ENCODE measurements at regions of chr5 and their contacts with region 1.

Region 1: DNA sequence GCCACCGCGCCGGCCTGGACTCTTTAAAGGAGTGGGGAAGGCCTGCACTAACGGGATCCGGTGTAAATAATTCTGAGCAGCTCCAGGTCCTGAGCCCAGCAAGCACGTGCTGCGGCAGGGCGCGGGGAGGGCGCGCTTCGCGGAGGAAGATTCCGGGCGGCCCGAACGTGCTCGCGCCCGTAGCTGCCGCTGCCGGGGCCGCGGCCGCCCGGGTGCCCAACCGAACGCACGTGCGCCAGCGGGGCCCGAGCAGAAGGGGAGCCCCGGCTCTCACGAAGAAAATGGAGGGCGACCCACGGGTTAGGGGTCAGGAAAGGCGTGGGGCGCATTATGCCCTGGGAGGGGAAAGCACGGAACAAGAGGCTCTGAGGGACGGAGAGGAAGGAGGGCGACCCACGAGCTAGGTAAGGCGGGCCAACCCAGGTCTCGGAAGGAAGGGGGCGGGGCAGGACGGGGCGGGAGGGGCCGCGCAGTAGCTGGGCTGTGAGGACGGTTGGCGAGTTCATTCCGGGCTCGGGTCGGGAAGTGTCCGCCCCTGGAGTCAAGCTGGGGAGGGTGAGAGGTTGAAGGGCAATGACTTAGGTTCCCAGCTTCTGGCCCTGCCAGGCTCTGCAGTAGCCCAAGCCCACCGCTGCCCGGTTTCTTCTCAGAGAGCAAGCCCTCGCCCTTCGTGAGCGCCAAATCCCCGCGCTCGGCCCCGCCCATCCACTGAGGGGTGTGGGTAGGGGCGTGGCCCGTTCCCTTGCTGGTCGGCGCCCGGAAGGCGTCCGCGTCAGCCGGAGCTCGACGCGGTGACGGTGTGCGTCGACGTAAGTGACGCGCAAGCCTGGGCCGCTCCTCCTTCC is at the start of gene ZNF131:
- DNase-seq: peak; percentile 99
- ATAC-seq: peak; percentile 88
- H3K4me3 ChIP-seq: peak within 1 kb of the TSS; percentile 82 to 91 (median 85)
- H3K4me3 Mint-ChIP-seq: peak within 1 kb of the TSS; percentile 94
- H3K27ac ChIP-seq: peak within 1 kb of the TSS; percentile 87 to 97
- H3K27ac Mint-ChIP-seq: peak within 1 kb of the TSS; percentile 97
- H3K4me1 ChIP-seq: peaks cover 24 to 26% of the 10 kb centered on the region in 2 donors
- H3K4me1 Mint-ChIP-seq: peaks cover 29% of the 10 kb centered on the region
- H3K27me3 ChIP-seq: no peaks in the 10 kb centered on the region
- H3K27me3 Mint-ChIP-seq: no peaks in the 10 kb centered on the region
- CTCF ChIP-seq: no peak
- total RNA-seq, gene ZNF131: 64.0 and 72.5 TPM in 2 replicates

Region 2: DNA sequence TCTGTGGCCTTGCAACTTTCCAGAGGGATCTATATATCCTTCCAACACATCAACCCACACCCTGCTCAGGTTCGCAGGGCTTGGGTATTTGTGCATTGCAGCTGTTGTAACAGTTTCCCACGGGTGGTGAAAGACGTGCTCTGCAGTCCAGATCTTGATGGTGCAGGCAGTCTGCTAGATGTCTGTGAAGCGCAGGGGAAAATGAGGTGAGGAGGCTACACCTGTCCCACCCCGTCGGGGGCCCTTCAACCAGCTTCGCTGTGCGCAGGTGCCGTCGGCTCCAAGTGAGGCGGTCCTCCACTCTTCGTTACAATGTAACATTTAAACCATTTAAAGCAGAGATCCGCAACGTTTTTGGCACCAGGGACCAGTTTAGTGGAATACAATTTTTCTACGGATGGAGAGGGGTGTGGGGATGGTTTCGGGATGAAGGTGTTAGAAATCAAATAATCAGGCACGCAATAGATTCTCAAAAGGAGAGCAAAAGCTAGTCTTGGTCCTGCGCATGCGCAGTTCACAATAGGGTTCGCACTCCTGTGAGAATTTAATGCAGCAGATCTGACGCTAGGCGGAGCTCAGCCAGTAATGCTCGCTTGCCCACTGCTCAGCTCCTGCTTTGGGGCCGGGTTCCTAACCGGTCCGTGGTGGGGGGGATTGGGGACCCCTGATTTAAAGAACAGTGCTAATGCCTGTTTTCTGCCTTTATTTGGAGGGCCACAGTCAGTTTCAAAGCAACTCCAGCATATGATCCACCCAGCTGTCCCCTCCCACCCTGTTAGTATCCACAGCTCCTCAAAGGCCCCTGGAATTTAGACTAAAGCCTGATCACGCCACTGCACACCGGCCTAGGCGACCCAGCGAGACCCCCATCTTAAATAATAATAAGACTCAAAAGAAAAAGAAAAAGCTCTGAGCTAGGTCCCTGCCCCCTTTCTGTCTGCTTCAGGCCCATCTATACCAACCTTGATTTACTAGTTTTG is 212.1 kb before region 1 on chr5:
- CTCF ChIA-PET with region 1: interaction called, 13 read pairs
- POLR2A ChIA-PET with region 1: interaction called, 13 read pairs
- intact Hi-C with region 1: loop called (anchors 5 kb)
- DNase-seq: peak; percentile 93
- ATAC-seq: peak; percentile 96
- H3K4me3 ChIP-seq: peak overlapping the region; percentile 52 to 88 (median 72)
- H3K4me3 Mint-ChIP-seq: peak overlapping the region; percentile 98
- H3K27ac ChIP-seq: peak overlapping the region in 1 of 2 donors; percentile 6
- H3K27ac Mint-ChIP-seq: peak overlapping the region; percentile 93
- H3K4me1 ChIP-seq: peaks cover 5 to 9% of the 10 kb centered on the region in 2 donors
- H3K4me1 Mint-ChIP-seq: peaks cover 10% of the 10 kb centered on the region
- H3K27me3 ChIP-seq: peaks cover 0 to 7% (median 2%) of the 10 kb centered on the region in 4 experiments
- H3K27me3 Mint-ChIP-seq: peaks cover 21% of the 10 kb centered on the region
- CTCF ChIP-seq: peak; percentile 88

Region 3: DNA sequence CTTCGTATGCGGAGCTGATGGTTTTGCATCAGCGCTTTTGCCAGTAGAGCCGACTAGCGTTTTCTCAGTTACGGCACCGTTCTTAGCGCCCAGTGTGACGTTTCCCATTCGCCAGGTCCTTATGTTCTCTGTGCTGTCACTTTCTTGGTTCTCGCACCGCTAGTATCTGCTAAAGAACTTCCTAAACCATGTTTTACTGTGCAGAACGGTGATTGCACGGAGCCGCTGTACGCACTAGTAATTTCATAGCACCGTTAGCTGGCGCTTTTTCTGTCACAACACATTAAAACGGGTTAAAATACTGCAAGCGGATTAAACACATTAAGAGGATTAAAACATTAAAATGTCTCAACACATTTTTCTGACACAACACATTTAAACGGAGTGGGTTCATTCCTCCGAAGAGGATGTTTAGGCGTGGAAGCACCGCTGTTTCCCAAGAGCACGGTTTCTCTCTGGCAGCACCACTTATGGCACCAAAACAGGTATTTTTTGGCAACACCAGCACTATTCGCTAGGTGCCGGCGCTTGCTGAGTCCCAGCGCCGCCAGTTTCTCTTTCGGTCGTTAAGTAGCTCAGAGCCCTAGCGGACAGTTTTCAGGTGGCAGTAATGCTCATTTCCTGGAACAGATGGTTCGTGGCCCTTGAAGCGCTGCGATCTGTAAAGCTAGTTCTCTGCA is 101.2 kb before region 1 on chr5:
- CTCF ChIA-PET with region 1: interaction called, 16 read pairs
- POLR2A ChIA-PET with region 1: interaction called, 27 read pairs
- intact Hi-C with region 1: loop called (anchors 1 kb)
- DNase-seq: peak; percentile 94
- ATAC-seq: peak; percentile 63
- H3K4me3 ChIP-seq: peak overlapping the region; percentile 63 to 99 (median 80)
- H3K4me3 Mint-ChIP-seq: peak overlapping the region; percentile 99
- H3K27ac ChIP-seq: peak overlapping the region; percentile 96 to 98
- H3K27ac Mint-ChIP-seq: peak overlapping the region; percentile 100
- H3K4me1 ChIP-seq: peaks cover 25 to 32% of the 10 kb centered on the region in 2 donors
- H3K4me1 Mint-ChIP-seq: peaks cover 42% of the 10 kb centered on the region
- H3K27me3 ChIP-seq: no peaks in the 10 kb centered on the region
- H3K27me3 Mint-ChIP-seq: no peaks in the 10 kb centered on the region
- CTCF ChIP-seq: peak; percentile 77

Region 4: DNA sequence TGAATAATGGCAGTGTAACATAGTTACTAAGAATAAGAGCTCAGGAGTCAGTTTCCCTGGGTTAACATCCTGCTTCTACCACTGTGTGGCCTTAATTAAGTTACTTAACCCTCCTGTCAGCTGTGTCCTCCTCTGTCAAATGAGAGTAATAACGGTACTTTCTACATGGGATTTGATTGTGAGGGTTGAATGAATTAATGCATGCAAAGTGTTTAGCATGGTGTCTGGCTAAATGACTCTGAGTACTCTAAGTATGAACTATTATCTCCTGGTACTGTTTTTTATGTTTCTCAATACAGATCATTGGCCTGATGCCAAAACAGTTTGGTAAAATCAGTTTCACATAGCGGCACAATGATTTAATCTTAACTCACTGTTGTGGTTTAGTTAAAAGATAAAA is 19.3 kb after region 1 on chr5:
- CTCF ChIA-PET with region 1: no interaction called
- POLR2A ChIA-PET with region 1: interaction called, 14 read pairs
- intact Hi-C with region 1: no loop called
- DNase-seq: no peak
- ATAC-seq: no peak
- H3K4me3 ChIP-seq: no peak overlapping the region
- H3K4me3 Mint-ChIP-seq: no peak overlapping the region
- H3K27ac ChIP-seq: no peak overlapping the region
- H3K27ac Mint-ChIP-seq: peak overlapping the region; percentile 5
- H3K4me1 ChIP-seq: no peaks in the 10 kb centered on the region
- H3K4me1 Mint-ChIP-seq: peaks cover 25% of the 10 kb centered on the region
- H3K27me3 ChIP-seq: no peaks in the 10 kb centered on the region
- H3K27me3 Mint-ChIP-seq: no peaks in the 10 kb centered on the region
- CTCF ChIP-seq: no peak

Region 5: DNA sequence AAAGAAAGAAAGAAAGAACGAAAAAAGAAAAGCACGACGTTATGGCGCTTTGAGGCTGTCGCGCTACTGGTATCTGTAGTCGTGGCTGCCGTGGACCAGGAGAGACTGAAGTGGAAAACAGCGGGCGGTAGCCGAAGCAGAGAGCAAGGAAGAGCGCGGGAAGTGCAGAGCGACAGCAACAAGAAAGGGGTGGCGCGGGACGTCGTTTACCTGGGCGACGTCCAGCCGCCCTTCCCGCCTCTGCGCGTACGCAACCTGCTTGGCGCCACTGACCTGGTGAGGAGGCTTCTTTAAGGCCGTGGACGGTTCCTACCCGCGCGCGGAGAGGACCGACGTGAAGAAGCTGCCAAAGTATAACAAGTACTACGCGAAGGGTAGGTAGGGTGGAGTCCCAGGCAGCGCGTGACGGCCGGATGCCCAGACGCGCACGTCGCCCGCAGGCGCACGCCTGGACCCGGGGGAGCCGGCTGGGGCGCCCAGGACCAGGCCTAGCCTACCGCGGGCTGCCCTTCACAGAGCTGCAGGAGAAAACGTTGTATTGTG is 275.9 kb after region 1 on chr5:
- CTCF ChIA-PET with region 1: no interaction called
- POLR2A ChIA-PET with region 1: interaction called, 3 read pairs
- intact Hi-C with region 1: loop called (anchors 5 kb)
- DNase-seq: peak; percentile 82
- ATAC-seq: peak; percentile 96
- H3K4me3 ChIP-seq: peak overlapping the region; percentile 65 to 89 (median 77)
- H3K4me3 Mint-ChIP-seq: peak overlapping the region; percentile 95
- H3K27ac ChIP-seq: peak overlapping the region; percentile 81 to 83
- H3K27ac Mint-ChIP-seq: peak overlapping the region; percentile 93
- H3K4me1 ChIP-seq: peaks cover 9 to 10% of the 10 kb centered on the region in 2 donors
- H3K4me1 Mint-ChIP-seq: peaks cover 21% of the 10 kb centered on the region
- H3K27me3 ChIP-seq: no peaks in the 10 kb centered on the region
- H3K27me3 Mint-ChIP-seq: no peaks in the 10 kb centered on the region
- CTCF ChIP-seq: no peak

Region 6: DNA sequence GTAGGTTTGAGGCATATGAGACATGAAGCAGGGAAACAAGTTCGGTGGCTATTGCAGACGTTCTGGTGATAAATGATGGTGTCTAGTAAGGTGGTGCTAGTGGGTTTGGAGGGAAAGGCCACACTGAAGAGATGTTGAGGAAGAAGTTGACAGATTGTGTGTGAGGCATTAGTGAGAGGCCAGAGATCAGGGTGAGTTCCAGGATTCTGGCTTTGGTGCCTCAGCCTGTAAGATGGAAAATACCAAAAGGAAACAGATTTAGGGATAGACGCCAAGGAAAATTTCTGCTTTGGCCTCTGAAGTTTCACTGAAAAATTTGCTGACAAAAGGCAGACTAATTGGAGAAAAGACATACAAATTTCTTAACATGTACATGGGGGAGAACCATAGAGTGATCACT is 442.4 kb after region 1 on chr5:
- CTCF ChIA-PET with region 1: no interaction called
- POLR2A ChIA-PET with region 1: no interaction called
- intact Hi-C with region 1: no loop called
- DNase-seq: no peak
- ATAC-seq: no peak
- H3K4me3 ChIP-seq: no peak overlapping the region
- H3K4me3 Mint-ChIP-seq: no peak overlapping the region
- H3K27ac ChIP-seq: no peak overlapping the region
- H3K27ac Mint-ChIP-seq: no peak overlapping the region
- H3K4me1 ChIP-seq: no peaks in the 10 kb centered on the region
- H3K4me1 Mint-ChIP-seq: no peaks in the 10 kb centered on the region
- H3K27me3 ChIP-seq: no peaks in the 10 kb centered on the region
- H3K27me3 Mint-ChIP-seq: no peaks in the 10 kb centered on the region
- CTCF ChIP-seq: no peak

Region 7: DNA sequence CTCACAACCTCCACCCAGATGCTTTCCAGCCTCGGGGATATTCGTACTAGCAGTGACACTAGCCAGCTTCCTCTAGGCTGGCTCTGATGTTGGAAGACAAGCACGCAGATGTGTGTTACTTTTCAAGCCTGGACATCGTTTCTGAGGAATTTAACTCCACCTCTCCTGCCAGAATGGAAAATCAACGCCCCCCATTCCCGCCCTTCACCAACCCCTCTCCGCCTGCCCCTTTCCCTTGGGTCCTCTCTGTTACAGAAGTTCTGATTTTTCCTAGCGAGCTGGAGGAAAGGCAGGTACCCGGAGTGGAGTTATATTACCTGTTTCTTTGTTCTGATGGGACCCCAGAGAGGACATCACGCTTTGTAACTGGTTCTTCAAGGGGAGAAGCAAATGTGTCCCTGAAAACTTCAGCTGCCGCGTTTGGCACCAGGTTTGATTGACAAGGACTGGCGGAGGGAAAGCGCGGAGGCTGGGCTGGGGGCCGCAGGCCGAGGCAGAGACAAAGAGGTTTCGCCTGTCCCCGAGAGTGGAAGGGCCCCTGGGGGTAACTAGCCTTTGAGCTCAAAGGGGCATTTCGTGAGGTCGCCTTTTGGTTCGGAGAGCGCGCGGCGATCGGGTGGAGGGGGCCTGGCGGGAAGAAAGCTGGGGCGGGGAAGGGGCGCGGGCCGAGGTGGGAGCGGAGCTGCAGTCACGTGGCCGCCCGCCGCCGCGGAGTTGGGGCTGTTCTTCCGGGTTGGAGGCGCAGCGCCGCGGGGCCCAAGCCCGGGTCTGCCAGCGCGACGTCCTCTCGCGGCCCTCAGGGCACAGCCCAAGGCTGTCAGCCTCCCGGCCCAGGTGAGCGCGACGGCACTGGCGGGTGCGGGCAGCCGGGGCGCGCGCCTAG is 481.8 kb after region 1 on chr5 and contains the start of gene NNT:
- CTCF ChIA-PET with region 1: no interaction called
- POLR2A ChIA-PET with region 1: interaction called, 5 read pairs
- intact Hi-C with region 1: loop called (anchors 1 kb)
- DNase-seq: peak; percentile 83
- ATAC-seq: peak; percentile 71
- H3K4me3 ChIP-seq: peak within 1 kb of the TSS; percentile 65 to 99 (median 80)
- H3K4me3 Mint-ChIP-seq: peak within 1 kb of the TSS; percentile 95
- H3K27ac ChIP-seq: peak within 1 kb of the TSS; percentile 75 to 89
- H3K27ac Mint-ChIP-seq: peak within 1 kb of the TSS; percentile 91
- H3K4me1 ChIP-seq: peaks cover 16 to 24% of the 10 kb centered on the region in 2 donors
- H3K4me1 Mint-ChIP-seq: peaks cover 34% of the 10 kb centered on the region
- H3K27me3 ChIP-seq: no peaks in the 10 kb centered on the region
- H3K27me3 Mint-ChIP-seq: no peaks in the 10 kb centered on the region
- CTCF ChIP-seq: no peak
- total RNA-seq, gene NNT: 61.1 and 63.0 TPM in 2 replicates